AG04449 (cell line): ENCODE measurements at regions of chr7 and their contacts with region 1.

Region 1: GRCh38 chr7:98420966-98421612 is 20.2 kb upstream of the BAIAP2L1 start:
- DNase-seq: no peak
- H3K4me3 ChIP-seq: no peak overlapping the region
- CTCF ChIP-seq: peak; percentile 96

Region 2: GRCh38 chr7:98294796-98295382 is 126.2 kb before region 1 on chr7:
- CTCF ChIA-PET with region 1: interaction called, 13 read pairs
- POLR2A ChIA-PET with region 1: no interaction called
- DNase-seq: no peak
- H3K4me3 ChIP-seq: no peak overlapping the region
- CTCF ChIP-seq: peak; percentile 80

Region 3: GRCh38 chr7:98434095-98434494 is 13.0 kb after region 1 on chr7:
- CTCF ChIA-PET with region 1: interaction called, 43 read pairs
- POLR2A ChIA-PET with region 1: no interaction called
- DNase-seq: no peak
- H3K4me3 ChIP-seq: no peak overlapping the region
- CTCF ChIP-seq: no peak